Activated CD4-positive, alpha-beta memory T cell treated with anti-CD3 and anti-CD28 coated beads, Interleukin-2, amount 10 ng/mL, durations not matched to agents 7 days and 5 days (primary cell): ENCODE measurements at regions of chr14 and their contacts with region 1.

Region 1: DNA sequence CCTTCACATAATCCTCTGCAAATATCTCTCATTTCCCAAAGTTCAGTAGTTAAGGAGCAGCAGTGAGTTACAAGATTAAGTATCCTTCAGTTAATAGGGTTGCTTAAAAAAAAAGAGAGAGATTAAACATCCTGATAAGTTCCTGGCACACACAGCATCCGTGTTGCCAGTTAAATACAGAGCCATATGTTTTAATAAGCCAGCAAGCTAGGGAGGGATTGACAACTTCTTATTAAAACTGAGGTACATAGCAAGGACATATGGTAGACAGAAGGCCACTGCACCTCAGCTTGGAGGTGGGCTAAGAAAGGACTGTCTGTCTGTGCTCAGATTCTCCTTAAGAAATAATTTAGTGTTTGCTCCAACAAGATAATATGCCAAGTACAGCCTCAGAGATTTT is 9.6 kb upstream of the TMEM30B start:
- DNase-seq: no peak
- H3K4me3 Mint-ChIP-seq: no peak overlapping the region
- H3K27ac Mint-ChIP-seq: no peak overlapping the region
- H3K4me1 Mint-ChIP-seq: peaks cover 19% of the 10 kb centered on the region
- H3K27me3 Mint-ChIP-seq: no peaks in the 10 kb centered on the region

Region 2: GRCh38 chr14:61153431-61153830 is 137.3 kb before region 1 on chr14:
- CTCF ChIA-PET with region 1: no interaction called
- POLR2A ChIA-PET with region 1: no interaction called
- DNase-seq: no peak
- H3K4me3 Mint-ChIP-seq: no peak overlapping the region
- H3K27ac Mint-ChIP-seq: no peak overlapping the region
- H3K4me1 Mint-ChIP-seq: no peaks in the 10 kb centered on the region
- H3K27me3 Mint-ChIP-seq: peaks cover 15% of the 10 kb centered on the region

Region 3: DNA sequence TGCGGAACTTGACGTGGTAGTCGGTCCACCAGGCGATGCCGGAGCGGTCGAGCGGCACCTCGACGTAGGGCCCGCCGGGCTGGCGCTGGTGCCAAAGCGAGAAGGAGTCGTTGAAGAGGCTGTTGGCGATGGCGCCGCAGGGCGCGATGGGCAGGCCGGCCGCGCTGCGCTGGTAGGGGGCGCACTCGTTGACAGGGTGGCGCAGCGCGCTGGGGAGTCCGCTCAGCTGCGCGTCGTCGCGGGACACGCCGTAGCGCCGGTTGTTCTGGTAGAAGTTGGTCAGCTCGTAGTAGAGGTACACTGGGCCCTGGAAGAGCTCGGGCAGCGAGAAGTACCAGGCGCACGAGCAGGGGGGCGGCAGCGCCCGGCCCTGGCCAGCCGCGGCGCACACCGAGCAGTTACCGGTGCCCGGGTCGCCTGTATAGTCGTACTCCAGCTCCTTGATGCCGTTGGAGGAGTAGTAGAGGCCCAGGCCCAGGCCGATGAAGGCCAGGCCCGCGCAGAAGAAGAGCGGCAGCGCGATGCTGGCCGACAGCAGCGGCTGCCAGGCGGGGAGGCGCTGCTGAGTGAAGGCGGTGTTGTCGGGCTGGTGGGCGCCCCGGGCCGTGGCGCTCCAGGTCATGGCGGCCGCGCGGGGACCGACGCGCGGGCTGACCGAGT is 10.0 kb before region 1 on chr14:
- CTCF ChIA-PET with region 1: interaction called, 17 read pairs
- POLR2A ChIA-PET with region 1: no interaction called
- DNase-seq: peak; percentile 77
- H3K4me3 Mint-ChIP-seq: peak overlapping the region; percentile 80
- H3K27ac Mint-ChIP-seq: peak overlapping the region; percentile 62
- H3K4me1 Mint-ChIP-seq: peaks cover 40% of the 10 kb centered on the region
- H3K27me3 Mint-ChIP-seq: peaks cover 31% of the 10 kb centered on the region